Natural killer cell (primary cell): ENCODE measurements at regions of chr1 and their contacts with region 1.

Region 1: DNA sequence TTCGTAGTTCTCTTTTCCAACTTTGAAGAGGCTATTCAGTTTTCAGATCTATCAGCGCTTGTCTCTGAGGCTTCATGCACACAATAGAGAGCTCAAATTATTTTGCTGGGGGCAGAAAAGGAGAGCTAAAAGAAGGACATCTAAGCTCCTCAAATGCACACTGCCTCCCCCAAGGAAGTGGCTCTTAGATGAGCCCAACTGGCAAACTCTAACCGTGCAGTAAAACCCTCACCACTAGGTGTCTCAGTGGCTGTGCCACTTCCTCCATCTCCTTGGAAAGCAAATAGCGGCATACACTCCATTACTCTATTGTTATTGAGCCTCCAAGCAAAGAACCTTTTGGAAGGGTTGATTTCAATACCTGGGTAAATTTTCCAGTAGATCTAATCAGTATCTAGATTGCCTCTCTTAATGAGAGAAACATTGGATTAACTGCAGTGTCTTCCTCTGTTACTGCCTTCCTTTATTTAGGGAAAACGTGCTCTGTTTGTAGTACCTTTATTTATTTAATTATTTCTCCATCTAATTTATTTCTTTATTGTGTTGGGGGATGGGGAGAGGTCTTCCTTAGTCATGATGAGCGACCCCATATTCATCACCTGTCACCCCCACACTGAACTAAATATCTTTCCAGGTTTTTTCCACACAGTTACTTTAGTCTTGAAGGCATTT is 9.2 kb upstream of the SFPQ start:
- DNase-seq: peak; percentile 43 to 87
- ATAC-seq: peak; percentile 95 to 100 (median 100)
- H3K4me3 ChIP-seq: no peak overlapping the region
- H3K4me3 Mint-ChIP-seq: no peak overlapping the region
- H3K27ac ChIP-seq: no peak overlapping the region
- H3K27ac Mint-ChIP-seq: no peak overlapping the region
- H3K4me1 ChIP-seq: no peaks in the 10 kb centered on the region
- H3K4me1 Mint-ChIP-seq: peaks cover 7% of the 10 kb centered on the region in 2 donors
- H3K27me3 ChIP-seq: peaks cover 2% of the 10 kb centered on the region
- H3K27me3 Mint-ChIP-seq: peaks cover 8 to 9% of the 10 kb centered on the region in 2 donors
- CTCF ChIP-seq: peak; percentile 83

Region 2: GRCh38 chr1:35259561-35259960 is 57.4 kb after region 1 on chr1:
- intact Hi-C with region 1: no loop called
- DNase-seq: no peak
- ATAC-seq: no peak
- H3K4me3 ChIP-seq: no peak overlapping the region
- H3K4me3 Mint-ChIP-seq: no peak overlapping the region
- H3K27ac ChIP-seq: no peak overlapping the region
- H3K27ac Mint-ChIP-seq: no peak overlapping the region
- H3K4me1 ChIP-seq: no peaks in the 10 kb centered on the region
- H3K4me1 Mint-ChIP-seq: peaks cover 0 to under 1% of the 10 kb centered on the region in 2 donors
- H3K27me3 ChIP-seq: no peaks in the 10 kb centered on the region
- H3K27me3 Mint-ChIP-seq: peaks cover 0 to 17% of the 10 kb centered on the region in 2 donors
- CTCF ChIP-seq: no peak

Region 3: DNA sequence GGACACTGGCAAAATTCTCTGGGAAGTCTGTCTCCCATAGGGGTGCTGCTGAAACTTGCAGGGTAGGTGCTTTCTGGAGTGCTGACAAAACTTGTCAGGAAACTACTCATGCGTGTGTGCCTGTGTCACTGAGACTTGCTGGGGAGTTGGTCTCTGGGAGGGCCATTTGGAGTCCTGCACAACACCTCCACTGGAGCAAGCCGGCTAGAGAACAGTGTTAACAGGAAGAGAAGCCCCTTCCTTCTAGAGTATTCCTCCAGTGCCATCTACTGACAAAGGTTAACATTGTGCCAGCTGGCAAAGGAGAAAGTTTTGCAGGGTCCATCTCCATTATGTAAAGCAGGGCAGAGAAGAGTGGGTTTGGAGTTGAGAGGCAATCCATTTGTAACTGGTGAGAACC is 96.3 kb after region 1 on chr1:
- intact Hi-C with region 1: loop called (anchors 1 kb)
- DNase-seq: peak in 1 of 2 donors; percentile 72
- ATAC-seq: peak; percentile 72 to 87 (median 79)
- H3K4me3 ChIP-seq: no peak overlapping the region
- H3K4me3 Mint-ChIP-seq: no peak overlapping the region
- H3K27ac ChIP-seq: no peak overlapping the region
- H3K27ac Mint-ChIP-seq: peak overlapping the region in 1 of 2 donors; percentile 29
- H3K4me1 ChIP-seq: no peaks in the 10 kb centered on the region
- H3K4me1 Mint-ChIP-seq: peaks cover 11 to 15% of the 10 kb centered on the region in 2 donors
- H3K27me3 ChIP-seq: no peaks in the 10 kb centered on the region
- H3K27me3 Mint-ChIP-seq: no peaks in the 10 kb centered on the region
- CTCF ChIP-seq: peak; percentile 35

Region 4: GRCh38 chr1:35434703-35435102 is 232.5 kb after region 1 on chr1:
- intact Hi-C with region 1: loop called (anchors 5 kb)
- DNase-seq: no peak
- ATAC-seq: no peak
- H3K4me3 ChIP-seq: no peak overlapping the region
- H3K4me3 Mint-ChIP-seq: no peak overlapping the region
- H3K27ac ChIP-seq: no peak overlapping the region
- H3K27ac Mint-ChIP-seq: no peak overlapping the region
- H3K4me1 ChIP-seq: peaks cover 7% of the 10 kb centered on the region
- H3K4me1 Mint-ChIP-seq: peaks cover 0 to 29% of the 10 kb centered on the region in 2 donors
- H3K27me3 ChIP-seq: no peaks in the 10 kb centered on the region
- H3K27me3 Mint-ChIP-seq: no peaks in the 10 kb centered on the region
- CTCF ChIP-seq: no peak

Region 5: GRCh38 chr1:36675106-36675505 is 1472.9 kb after region 1 on chr1:
- intact Hi-C with region 1: no loop called
- DNase-seq: no peak
- ATAC-seq: no peak
- H3K4me3 ChIP-seq: no peak overlapping the region
- H3K4me3 Mint-ChIP-seq: no peak overlapping the region
- H3K27ac ChIP-seq: no peak overlapping the region
- H3K27ac Mint-ChIP-seq: no peak overlapping the region
- H3K4me1 ChIP-seq: no peaks in the 10 kb centered on the region
- H3K4me1 Mint-ChIP-seq: no peaks in the 10 kb centered on the region
- H3K27me3 ChIP-seq: peaks cover 2% of the 10 kb centered on the region
- H3K27me3 Mint-ChIP-seq: peaks cover 18 to 45% of the 10 kb centered on the region in 2 donors
- CTCF ChIP-seq: no peak